GM10248 (cell line): ENCODE measurements at regions of chr1 and their contacts with region 1.

Region 1: GRCh38 chr1:96927125-96927524 is 205.5 kb downstream of the PTBP2 start:
- DNase-seq: no peak
- CTCF ChIP-seq: no peak

Region 2: GRCh38 chr1:95146637-95147036 is 1780.5 kb before region 1 on chr1:
- CTCF ChIA-PET with region 1: no interaction called
- POLR2A ChIA-PET with region 1: interaction called, 10 read pairs
- DNase-seq: no peak
- CTCF ChIP-seq: no peak